A673 (cell line): ENCODE measurements at regions of chrX and their contacts with region 1.

Region 1: GRCh38 chrX:68196939-68197791 is 236.1 kb downstream of the OPHN1 start:
- DNase-seq: peak; percentile 64
- H3K4me3 ChIP-seq: no peak overlapping the region
- H3K27ac ChIP-seq: no peak overlapping the region
- H3K4me1 ChIP-seq: no peaks in the 10 kb centered on the region
- H3K27me3 ChIP-seq: no peaks in the 10 kb centered on the region
- CTCF ChIP-seq: peak; percentile 82

Region 2: DNA sequence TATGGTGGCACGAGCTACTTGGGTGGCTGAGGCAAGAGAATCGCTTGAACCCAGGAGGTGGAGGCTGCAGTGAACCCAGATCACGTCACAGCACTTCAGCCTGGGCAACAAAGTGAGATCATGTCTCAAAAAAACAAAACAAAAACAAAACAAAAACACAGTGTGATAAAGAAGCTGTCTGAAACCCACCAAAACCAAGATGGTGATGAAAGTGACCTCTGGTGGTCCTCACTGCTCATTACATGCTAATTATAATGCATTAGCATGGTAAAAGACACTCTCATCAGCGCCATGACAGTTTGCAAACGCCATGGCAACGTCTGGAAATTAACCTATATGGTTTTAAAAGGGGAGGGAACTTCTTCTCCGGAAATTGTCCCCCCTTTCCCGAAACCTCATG is 265.5 kb after region 1 on chrX:
- CTCF ChIA-PET with region 1: interaction called, 9 read pairs
- POLR2A ChIA-PET with region 1: no interaction called
- intact Hi-C with region 1: loop called (anchors 1 kb)
- DNase-seq: peak; percentile 72
- H3K4me3 ChIP-seq: no peak overlapping the region
- H3K27ac ChIP-seq: no peak overlapping the region
- H3K4me1 ChIP-seq: no peaks in the 10 kb centered on the region
- H3K27me3 ChIP-seq: no peaks in the 10 kb centered on the region
- CTCF ChIP-seq: peak; percentile 67

Region 3: GRCh38 chrX:68498508-68499379 is 301.6 kb after region 1 on chrX and contains the start of gene YIPF6:
- CTCF ChIA-PET with region 1: no interaction called
- POLR2A ChIA-PET with region 1: no interaction called
- intact Hi-C with region 1: loop called (anchors 10 kb)
- DNase-seq: peak; percentile 71
- H3K4me3 ChIP-seq: peak within 1 kb of the TSS; percentile 65
- H3K27ac ChIP-seq: peak within 1 kb of the TSS; percentile 94
- H3K4me1 ChIP-seq: peaks cover 4% of the 10 kb centered on the region
- H3K27me3 ChIP-seq: no peaks in the 10 kb centered on the region
- CTCF ChIP-seq: 0 out of 2 replicates have a peak, but pooled peaks have one; percentile 1
- total RNA-seq, gene YIPF6: 36.8 and 38.7 TPM in 2 replicates

Region 4: GRCh38 chrX:68511255-68511654 is 314.1 kb after region 1 on chrX:
- CTCF ChIA-PET with region 1: interaction called, 11 read pairs
- POLR2A ChIA-PET with region 1: no interaction called
- intact Hi-C with region 1: no loop called
- DNase-seq: peak; percentile 61
- H3K4me3 ChIP-seq: no peak overlapping the region
- H3K27ac ChIP-seq: no peak overlapping the region
- H3K4me1 ChIP-seq: no peaks in the 10 kb centered on the region
- H3K27me3 ChIP-seq: no peaks in the 10 kb centered on the region
- CTCF ChIP-seq: peak; percentile 83

Region 5: DNA sequence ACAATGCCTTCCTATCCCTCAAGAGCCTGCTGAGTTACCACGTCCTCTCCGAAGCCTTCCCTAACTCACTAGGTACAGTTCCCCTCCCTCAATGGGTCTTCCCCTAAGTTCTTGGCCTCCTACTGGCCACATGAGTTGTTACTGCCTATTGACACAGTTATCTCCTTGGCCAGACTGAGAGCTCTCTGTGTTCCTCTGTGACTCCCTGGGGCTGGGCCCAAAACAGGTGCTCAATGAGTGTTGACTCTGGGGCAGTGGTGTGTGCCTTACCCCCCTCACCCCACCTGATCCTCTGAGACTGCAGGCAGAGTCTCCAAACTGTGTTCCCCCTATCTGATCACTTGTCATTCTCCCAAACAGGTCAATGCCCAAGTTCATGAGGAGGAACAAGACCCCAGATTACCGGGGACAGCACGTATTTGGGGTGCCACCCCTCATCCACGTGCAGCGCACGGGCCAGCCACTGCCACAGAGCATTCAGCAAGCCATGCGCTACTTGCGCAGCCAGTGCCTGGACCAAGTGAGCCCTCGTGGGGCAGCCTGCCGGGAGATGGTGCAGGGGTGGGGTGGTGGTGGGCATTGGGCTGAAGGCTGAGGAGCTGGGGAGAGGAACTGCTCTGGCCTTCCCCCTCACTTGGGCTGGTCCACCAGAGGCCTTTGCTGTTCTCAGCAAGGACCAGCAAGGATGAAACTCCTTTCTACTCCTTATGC is 522.9 kb after region 1 on chrX:
- CTCF ChIA-PET with region 1: no interaction called
- POLR2A ChIA-PET with region 1: no interaction called
- intact Hi-C with region 1: loop called (anchors 5 kb)
- DNase-seq: peak; percentile 18
- H3K4me3 ChIP-seq: no peak overlapping the region
- H3K27ac ChIP-seq: no peak overlapping the region
- H3K4me1 ChIP-seq: no peaks in the 10 kb centered on the region
- H3K27me3 ChIP-seq: no peaks in the 10 kb centered on the region
- CTCF ChIP-seq: peak; percentile 36; the same call in 1 of the 2 replicates

Region 6: GRCh38 chrX:69222103-69223090 is 1025.2 kb after region 1 on chrX:
- CTCF ChIA-PET with region 1: no interaction called
- POLR2A ChIA-PET with region 1: no interaction called
- intact Hi-C with region 1: loop called (anchors 2 kb)
- DNase-seq: peak; percentile 90
- H3K4me3 ChIP-seq: no peak overlapping the region
- H3K27ac ChIP-seq: peak overlapping the region; percentile 22
- H3K4me1 ChIP-seq: peaks cover 18% of the 10 kb centered on the region
- H3K27me3 ChIP-seq: no peaks in the 10 kb centered on the region
- CTCF ChIP-seq: peak; percentile 87

Region 7: DNA sequence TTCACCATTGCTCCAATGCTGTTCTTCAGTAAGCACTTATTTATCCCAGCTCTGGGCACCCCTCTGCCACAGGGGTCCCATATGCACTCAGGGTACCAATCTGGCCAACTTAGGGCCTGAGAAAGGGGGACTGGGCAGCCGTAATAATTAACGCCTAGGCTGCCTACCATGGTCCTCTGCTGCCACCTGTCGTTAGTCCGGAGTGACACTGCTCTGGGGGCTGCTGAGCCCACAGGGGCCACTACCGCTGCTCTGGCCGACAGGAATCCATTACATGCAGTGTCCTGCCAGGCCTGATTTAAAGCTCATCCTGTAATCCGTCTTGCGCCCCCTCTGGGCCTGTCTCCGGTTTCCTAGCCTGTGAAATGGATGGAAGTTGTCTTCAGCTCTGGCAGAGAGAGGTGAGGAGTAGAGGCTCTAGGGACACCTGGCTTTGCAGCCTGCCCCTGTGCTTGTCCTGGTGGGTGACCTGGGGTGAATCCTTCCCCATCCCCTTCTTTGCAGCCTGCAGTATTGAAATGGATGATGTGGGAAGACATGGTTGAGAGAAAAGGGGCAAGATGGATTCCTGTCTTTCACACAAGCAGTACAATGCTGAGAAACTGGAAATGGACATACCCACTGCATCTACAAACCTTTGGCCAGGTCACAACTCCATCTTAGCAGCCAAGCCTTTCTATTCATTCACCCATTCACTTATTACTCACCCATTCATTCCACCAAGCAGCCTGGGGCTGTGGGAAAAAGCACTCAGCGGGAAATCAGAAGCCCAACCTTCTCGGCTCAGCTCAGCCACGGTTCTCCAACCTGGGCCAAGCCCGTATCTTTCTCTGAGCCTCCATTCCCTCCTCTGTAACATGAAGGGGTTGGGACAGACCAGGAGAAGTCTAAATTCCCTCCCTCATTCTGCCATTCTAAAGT is 1190.7 kb after region 1 on chrX:
- CTCF ChIA-PET with region 1: no interaction called
- POLR2A ChIA-PET with region 1: no interaction called
- intact Hi-C with region 1: loop called (anchors 5 kb)
- DNase-seq: peak; percentile 84
- H3K4me3 ChIP-seq: no peak overlapping the region
- H3K27ac ChIP-seq: peak overlapping the region; percentile 86
- H3K4me1 ChIP-seq: peaks cover 52% of the 10 kb centered on the region
- H3K27me3 ChIP-seq: no peaks in the 10 kb centered on the region
- CTCF ChIP-seq: peak; percentile 94